Posterior cingulate gyrus (tissue), 11 donors: ENCODE measurements at regions of chr12 and their contacts with region 1.

Region 1: DNA sequence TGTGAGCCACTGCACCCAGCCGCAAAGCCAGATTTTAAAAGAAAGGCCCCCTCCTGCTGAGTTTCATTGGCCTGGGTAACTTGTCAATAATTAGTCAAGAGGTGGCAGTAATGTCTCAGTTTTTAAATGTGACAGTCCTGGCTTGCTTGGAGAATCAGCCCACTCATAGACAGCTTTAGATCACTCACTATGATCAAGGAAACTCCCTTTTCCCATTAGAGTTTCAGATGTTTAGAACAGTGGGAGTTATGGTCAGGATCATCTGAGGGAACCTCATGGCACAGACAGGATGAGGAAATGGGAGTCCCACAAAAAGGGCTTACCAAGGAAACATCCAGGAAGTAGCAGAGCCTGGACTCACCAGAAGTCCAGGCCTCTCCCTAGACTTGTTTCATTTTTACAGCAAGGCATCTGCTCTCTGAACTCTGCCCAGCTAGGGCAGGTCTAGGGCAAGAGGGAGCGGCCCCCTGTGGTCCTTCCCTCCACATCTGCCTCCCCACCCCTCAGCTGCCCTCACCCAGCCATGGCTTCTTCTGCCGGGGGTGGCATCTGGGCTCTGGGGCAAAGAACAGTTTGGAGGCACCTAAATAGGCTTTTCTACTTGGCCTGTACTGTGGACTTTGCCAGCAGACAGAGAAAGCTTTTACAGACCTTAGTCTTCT is 11.2 kb downstream of the BCL2L14 start:
- DNase-seq: no peak

Region 2: GRCh38 chr12:12266873-12267741 is 185.1 kb after region 1 on chr12 and contains the start of gene LRP6:
- intact Hi-C with region 1: loop called (anchors 2 kb)
- DNase-seq: peak; percentile 80 to 98 (median 88)

Region 3: DNA sequence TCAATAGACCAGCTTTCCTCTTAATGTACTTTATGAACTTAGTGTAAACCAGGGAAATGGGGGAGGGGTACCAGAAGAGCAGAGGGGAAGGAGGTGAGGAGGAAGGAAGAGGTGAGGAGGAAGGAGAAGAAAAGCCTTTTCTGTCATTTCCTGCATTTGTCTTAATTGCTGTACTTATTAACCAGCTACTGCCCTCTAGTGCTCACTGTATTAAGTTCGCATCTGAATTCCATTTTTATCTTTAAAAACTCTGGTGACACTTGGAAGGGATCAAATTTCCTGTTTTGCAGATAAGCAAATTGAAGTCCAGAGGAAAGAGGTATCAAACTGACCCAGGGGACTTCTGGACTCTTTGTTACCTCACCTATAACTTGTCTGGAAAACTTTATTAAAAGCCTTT is 245.8 kb after region 1 on chr12:
- intact Hi-C with region 1: loop called (anchors 1 kb)
- DNase-seq: no peak

Region 4: DNA sequence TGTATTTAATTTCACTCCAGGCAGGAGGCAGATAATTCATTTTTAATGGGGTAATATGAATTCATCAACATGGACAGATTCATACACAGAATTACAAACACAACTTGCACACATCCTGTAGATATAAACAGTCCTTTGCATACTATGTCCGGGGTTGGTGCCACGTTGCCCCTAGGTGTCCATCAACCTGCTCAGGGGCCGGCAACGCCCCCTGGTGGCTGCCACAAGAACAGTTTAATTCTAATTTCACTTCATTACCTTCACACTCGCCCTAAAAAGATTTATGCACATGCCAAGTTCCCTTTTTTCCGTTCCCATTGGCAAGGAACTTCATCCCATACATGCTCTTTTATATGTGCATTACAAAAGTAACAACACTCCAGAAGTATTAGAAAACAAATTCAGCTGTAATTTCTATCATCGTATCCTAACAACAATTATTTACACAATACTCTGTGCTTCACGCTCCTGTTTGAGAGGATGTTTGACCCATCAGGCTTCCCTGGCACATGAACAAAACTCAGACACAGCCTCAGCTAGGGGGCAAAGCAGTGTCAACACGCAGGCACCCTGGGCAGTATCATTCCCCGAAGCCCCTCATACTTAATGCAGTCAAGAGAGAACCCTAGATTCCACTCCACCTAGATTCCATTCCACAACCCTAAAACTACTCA is 252.5 kb after region 1 on chr12:
- intact Hi-C with region 1: loop called (anchors 2 kb)
- DNase-seq: peak in 5 of 10 donors; percentile 26 to 89 (median 38)

Region 5: GRCh38 chr12:12704593-12705230 is 622.7 kb after region 1 on chr12:
- intact Hi-C with region 1: loop called (anchors 10 kb)
- DNase-seq: peak in 5 of 10 donors; percentile 40 to 90 (median 53)